BJ (cell line): ENCODE measurements at regions of chr7 and their contacts with region 1.

Region 1: GRCh38 chr7:31443457-31443856 is 70.4 kb upstream of the ITPRID1 start:
- DNase-seq: no peak
- H3K4me3 ChIP-seq: no peak overlapping the region
- H3K27me3 ChIP-seq: no peaks in the 10 kb centered on the region
- CTCF ChIP-seq: peak; percentile 78

Region 2: GRCh38 chr7:31432836-31433340 is 10.6 kb before region 1 on chr7:
- CTCF ChIA-PET with region 1: interaction called, 13 read pairs
- POLR2A ChIA-PET with region 1: no interaction called
- DNase-seq: no peak
- H3K4me3 ChIP-seq: no peak overlapping the region
- H3K27me3 ChIP-seq: no peaks in the 10 kb centered on the region
- CTCF ChIP-seq: no peak

Region 3: DNA sequence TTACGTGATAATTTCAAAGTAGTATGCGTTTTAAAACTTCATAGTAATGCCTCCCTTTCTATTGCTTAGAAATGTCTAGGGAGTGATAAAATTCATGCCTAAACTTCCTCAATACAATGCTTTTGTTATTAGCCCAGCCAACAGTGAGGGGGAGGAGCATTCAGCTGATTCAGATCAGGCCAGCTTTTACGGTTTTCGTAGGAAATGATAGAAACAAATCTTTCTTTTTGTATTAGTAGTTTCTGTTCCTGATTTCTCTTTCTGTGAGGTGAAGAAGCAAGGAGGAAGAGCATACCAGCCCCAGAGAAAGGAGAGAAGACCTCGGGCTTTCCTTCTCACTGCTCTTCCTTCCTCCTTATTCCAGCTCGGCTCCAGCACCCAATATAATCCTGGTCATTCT is 35.3 kb after region 1 on chr7:
- CTCF ChIA-PET with region 1: interaction called, 12 read pairs
- POLR2A ChIA-PET with region 1: no interaction called
- DNase-seq: no peak
- H3K4me3 ChIP-seq: no peak overlapping the region
- H3K27me3 ChIP-seq: no peaks in the 10 kb centered on the region; the same call in 1 of the 2 replicates
- CTCF ChIP-seq: no peak

Region 4: DNA sequence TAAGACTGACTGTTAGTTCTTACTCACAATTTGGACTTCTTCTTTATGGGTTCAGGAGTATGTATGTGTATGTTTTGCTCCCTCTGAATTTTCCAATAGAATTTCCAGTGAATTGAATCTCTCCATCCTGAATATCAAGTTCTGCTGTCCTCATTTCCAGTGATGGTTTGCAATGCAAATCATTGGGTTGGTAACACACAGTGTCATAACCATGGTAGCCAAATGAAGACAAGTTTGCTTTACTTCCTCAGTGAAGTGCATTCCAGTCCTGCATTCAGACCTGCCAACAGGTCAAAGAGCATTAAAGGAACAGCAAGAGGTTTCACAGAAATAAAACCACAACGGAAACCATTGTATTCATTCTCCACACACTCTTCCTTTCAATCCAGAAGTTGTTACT is 85.6 kb after region 1 on chr7:
- CTCF ChIA-PET with region 1: no interaction called
- POLR2A ChIA-PET with region 1: no interaction called
- DNase-seq: no peak
- H3K4me3 ChIP-seq: no peak overlapping the region
- H3K27me3 ChIP-seq: no peaks in the 10 kb centered on the region
- CTCF ChIP-seq: no peak

Region 5: DNA sequence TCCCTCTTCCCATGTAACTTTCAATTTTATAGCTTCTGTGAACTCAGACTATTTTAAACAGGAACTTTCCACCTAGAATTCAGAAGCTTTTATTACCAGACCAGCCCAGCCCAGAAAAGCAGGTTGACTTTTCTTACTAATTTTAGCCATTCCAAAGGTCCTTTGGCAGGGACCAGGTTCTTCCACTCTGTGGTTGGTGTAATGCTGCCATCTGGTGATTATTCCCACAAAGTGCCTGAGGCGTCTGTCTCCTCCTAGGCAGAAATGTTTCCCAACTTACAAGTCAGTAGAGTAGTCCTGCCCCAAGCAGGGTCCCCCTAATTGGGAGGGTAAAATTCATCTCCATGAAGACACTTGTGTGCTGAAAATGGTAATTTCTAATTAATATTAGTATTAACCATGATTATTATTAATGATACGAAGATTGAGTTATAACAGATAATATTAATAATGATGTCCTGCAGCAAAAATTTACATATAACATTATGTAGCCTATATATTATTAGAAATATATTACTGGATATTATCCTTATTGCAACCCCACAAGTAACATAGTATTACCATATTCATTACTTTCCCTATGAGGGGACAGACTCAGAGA is 190.5 kb after region 1 on chr7:
- CTCF ChIA-PET with region 1: interaction called, 30 read pairs
- POLR2A ChIA-PET with region 1: no interaction called
- DNase-seq: peak; percentile 11
- H3K4me3 ChIP-seq: no peak overlapping the region
- H3K27me3 ChIP-seq: no peaks in the 10 kb centered on the region
- CTCF ChIP-seq: peak; percentile 54

Region 6: GRCh38 chr7:31735991-31736982 is 292.8 kb after region 1 on chr7:
- CTCF ChIA-PET with region 1: interaction called, 10 read pairs
- POLR2A ChIA-PET with region 1: no interaction called
- DNase-seq: no peak
- H3K4me3 ChIP-seq: no peak overlapping the region
- H3K27me3 ChIP-seq: no peaks in the 10 kb centered on the region
- CTCF ChIP-seq: peak; percentile 85